Activated CD4-positive, alpha-beta T cell treated with anti-CD3 and anti-CD28 coated beads, Interleukin-2, amount 10 ng/mL, durations not matched to agents 24 days and 14 days (primary cell): ENCODE measurements at regions of chr14 and their contacts with region 1.

Region 1: GRCh38 chr14:73741386-73741875 is 27.2 kb upstream of the PNMA1 start:
- DNase-seq: peak; percentile 92
- H3K4me3 Mint-ChIP-seq: peak overlapping the region; percentile 91
- H3K27ac Mint-ChIP-seq: peak overlapping the region; percentile 85
- H3K4me1 Mint-ChIP-seq: peaks cover 67% of the 10 kb centered on the region
- H3K27me3 Mint-ChIP-seq: no peaks in the 10 kb centered on the region

Region 2: DNA sequence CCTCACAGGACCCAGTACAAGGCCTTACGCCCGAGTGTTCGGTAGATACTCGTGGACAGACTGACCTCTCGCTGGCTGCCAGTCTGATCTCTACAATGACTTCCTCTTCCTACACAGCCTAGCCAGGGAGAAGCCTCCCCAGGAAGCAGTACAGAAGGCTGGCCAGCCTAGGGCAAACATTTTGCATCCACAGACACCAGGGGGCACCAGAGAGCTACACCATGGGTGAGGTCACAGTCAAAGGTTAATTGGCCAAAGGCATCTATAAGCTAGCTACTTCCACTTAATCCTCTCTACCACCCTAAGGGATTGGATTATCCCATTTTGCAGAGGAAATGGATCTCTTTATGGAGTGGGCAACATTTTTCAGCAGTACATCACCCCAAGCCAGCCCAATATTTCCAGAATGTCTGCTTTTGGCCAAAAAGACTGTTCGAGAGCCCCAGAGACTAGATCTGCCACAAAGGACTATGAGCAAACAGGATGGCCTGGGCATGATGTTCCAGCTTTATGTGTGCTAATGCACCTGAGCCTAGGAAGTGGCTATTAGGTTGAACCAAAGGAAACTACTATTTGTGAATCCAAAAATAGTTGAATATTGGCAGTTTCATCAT is 12.6 kb before region 1 on chr14:
- intact Hi-C with region 1: loop called (anchors 1 kb)
- DNase-seq: peak; percentile 96
- H3K4me3 Mint-ChIP-seq: peak overlapping the region; percentile 16
- H3K27ac Mint-ChIP-seq: peak overlapping the region; percentile 83
- H3K4me1 Mint-ChIP-seq: peaks cover 29% of the 10 kb centered on the region
- H3K27me3 Mint-ChIP-seq: no peaks in the 10 kb centered on the region

Region 3: DNA sequence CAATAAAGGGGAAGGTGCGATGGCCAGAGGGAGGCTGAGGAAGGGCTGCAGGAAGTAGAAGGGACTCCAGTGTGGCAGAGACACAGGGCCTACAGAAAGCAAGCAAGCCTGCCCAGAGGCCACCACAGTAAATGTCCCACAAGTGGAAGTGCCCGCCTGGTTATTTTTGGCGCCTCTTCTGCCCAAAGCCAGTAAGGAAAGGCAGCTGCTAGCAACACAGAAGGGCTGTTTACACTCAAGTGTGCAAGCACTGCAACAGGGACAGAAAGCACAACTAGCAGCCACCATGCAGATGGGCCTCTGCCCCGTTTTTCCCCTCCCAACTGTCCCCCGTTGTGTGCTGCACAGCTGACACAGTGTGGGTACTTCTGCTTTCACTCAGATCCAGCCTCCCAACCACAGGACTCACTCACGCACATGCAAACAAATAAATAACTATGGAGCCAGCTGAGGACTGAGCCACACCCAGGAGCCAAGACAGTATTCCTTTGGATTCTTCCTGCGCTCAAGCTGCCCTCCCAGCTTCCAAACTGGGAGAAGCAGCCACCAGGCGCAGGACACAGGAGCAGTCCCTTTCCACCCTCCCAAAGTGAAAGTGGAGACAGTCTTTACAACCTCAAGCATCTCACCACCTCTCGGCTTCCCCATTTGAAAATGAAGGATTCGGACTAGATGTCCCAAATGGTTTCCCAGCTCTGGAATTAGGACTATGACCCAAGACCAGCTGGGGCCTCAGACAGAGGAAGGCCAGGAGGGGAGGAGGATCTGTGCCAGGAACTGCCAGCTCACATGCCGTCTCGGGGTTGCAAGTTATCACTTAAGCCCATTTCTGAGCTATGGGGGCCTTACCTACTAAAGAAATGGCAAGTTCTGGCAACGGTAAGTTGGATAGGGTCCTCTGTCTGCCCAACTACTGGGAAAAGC is 12.8 kb after region 1 on chr14:
- intact Hi-C with region 1: loop called (anchors 1 kb)
- DNase-seq: peak; percentile 85
- H3K4me3 Mint-ChIP-seq: peak overlapping the region; percentile 87
- H3K27ac Mint-ChIP-seq: peak overlapping the region; percentile 96
- H3K4me1 Mint-ChIP-seq: peaks cover 90% of the 10 kb centered on the region
- H3K27me3 Mint-ChIP-seq: no peaks in the 10 kb centered on the region

Region 4: GRCh38 chr14:73785873-73786695 is 44.7 kb after region 1 on chr14:
- intact Hi-C with region 1: loop called (anchors 5 kb)
- DNase-seq: peak; percentile 91
- H3K4me3 Mint-ChIP-seq: peak overlapping the region; percentile 94
- H3K27ac Mint-ChIP-seq: peak overlapping the region; percentile 95
- H3K4me1 Mint-ChIP-seq: peaks cover 60% of the 10 kb centered on the region
- H3K27me3 Mint-ChIP-seq: no peaks in the 10 kb centered on the region

Region 5: GRCh38 chr14:73825551-73826188 is 84.2 kb after region 1 on chr14:
- intact Hi-C with region 1: loop called (anchors 5 kb)
- DNase-seq: peak; percentile 91
- H3K4me3 Mint-ChIP-seq: no peak overlapping the region
- H3K27ac Mint-ChIP-seq: no peak overlapping the region
- H3K4me1 Mint-ChIP-seq: peaks cover 16% of the 10 kb centered on the region
- H3K27me3 Mint-ChIP-seq: peaks cover 5% of the 10 kb centered on the region

Region 6: DNA sequence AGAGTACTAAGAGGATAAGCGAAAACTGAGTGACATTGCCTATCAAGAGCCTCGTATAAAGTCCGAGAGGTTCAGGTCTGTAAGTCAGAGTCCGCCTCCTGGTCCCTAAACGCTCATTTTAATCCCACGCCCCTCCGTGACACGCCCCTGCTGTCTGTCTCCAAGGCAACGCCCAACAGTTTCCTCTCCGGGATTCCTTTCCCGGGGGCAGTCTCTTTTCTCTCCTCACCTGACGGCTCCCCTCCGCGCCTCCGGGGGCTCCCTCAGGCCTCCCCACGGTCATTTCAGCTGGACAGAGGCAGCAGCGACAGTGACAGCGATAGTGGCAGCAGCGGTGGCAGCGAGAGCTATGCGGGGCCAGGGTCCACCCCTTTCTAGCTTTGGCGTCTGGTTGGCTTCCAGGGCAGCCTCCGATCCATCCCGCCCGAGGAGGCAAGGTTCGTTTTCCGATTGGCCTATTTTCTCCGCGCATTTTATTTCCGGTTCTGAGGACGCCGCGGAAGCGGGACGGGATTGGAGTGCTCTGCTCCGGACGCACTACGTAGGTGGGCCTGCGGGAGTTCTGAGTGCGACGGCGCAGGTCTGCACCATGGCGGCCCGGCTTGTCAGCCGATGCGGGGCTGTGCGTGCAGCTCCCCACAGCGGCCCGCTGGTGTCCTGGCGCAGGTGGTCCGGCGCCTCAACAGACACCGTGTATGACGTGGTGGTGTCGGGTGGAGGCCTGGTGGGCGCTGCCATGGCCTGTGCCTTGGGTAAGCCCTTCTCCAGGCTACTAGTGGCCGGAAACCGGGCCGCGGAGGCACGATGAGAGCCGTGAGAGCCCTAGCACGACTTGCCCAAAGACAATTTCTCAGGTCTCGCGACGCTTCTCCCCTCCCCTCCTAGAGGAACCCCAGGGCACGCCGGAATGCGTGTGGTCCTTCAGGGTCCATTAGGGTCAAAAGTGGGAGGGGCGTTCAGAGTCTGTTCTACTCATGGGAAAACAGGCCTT is 208.6 kb after region 1 on chr14 and contains the starts of genes COQ6 and FAM161B:
- intact Hi-C with region 1: loop called (anchors 5 kb)
- DNase-seq: peak; percentile 98
- H3K4me3 Mint-ChIP-seq: peak within 1 kb of the TSS; percentile 99
- H3K27ac Mint-ChIP-seq: peak within 1 kb of the TSS; percentile 92
- H3K4me1 Mint-ChIP-seq: peaks cover 9% of the 10 kb centered on the region
- H3K27me3 Mint-ChIP-seq: no peaks in the 10 kb centered on the region
- total RNA-seq, gene COQ6: 16.6 and 20.1 TPM in 2 replicates
- total RNA-seq, gene FAM161B: 0.57 and 0.75 TPM in 2 replicates